Caco-2 (cell line): ENCODE measurements at regions of chr6 and their contacts with region 1.

Region 1: GRCh38 chr6:79894939-79895338 is 52.4 kb downstream of the ELOVL4 start:
- DNase-seq: no peak
- H3K4me3 ChIP-seq: no peak overlapping the region
- H3K4me3 Mint-ChIP-seq: no peak overlapping the region
- H3K27ac Mint-ChIP-seq: no peak overlapping the region
- H3K4me1 ChIP-seq: no peaks in the 10 kb centered on the region
- H3K4me1 Mint-ChIP-seq: no peaks in the 10 kb centered on the region
- H3K27me3 ChIP-seq: no peaks in the 10 kb centered on the region
- H3K27me3 Mint-ChIP-seq: no peaks in the 10 kb centered on the region
- CTCF ChIP-seq: no peak

Region 2: DNA sequence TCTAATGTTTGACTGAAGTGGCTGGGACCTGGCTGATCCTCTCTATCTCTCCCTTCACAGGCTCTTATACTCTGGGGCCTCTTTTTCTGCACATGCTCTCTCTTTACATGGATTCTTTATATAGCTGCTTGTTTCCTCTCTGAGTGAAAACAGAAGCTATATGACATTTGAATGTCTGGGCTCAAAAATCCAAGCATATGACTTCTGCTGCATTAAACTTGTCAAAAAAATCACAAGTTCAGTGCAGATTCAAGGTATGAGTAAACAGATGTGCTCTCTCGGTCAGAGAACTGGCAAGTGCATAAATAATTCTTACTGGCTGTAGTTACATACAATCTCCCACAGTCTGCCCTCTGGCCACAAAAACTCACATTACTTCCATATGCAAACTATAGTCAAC is 454.3 kb before region 1 on chr6:
- CTCF ChIA-PET with region 1: no interaction called
- POLR2A ChIA-PET with region 1: no interaction called
- intact Hi-C with region 1: no loop called
- DNase-seq: no peak
- H3K4me3 ChIP-seq: no peak overlapping the region
- H3K4me3 Mint-ChIP-seq: no peak overlapping the region
- H3K27ac Mint-ChIP-seq: peak overlapping the region; percentile 24
- H3K4me1 ChIP-seq: peaks cover 23% of the 10 kb centered on the region
- H3K4me1 Mint-ChIP-seq: peaks cover 22% of the 10 kb centered on the region
- H3K27me3 ChIP-seq: no peaks in the 10 kb centered on the region
- H3K27me3 Mint-ChIP-seq: no peaks in the 10 kb centered on the region
- CTCF ChIP-seq: no peak

Region 3: GRCh38 chr6:79878142-79878753 is 16.7 kb before region 1 on chr6:
- CTCF ChIA-PET with region 1: no interaction called
- POLR2A ChIA-PET with region 1: no interaction called
- intact Hi-C with region 1: no loop called
- DNase-seq: no peak
- H3K4me3 ChIP-seq: no peak overlapping the region
- H3K4me3 Mint-ChIP-seq: no peak overlapping the region
- H3K27ac Mint-ChIP-seq: no peak overlapping the region
- H3K4me1 ChIP-seq: peaks cover 9% of the 10 kb centered on the region; the same call in 1 of the 2 replicates
- H3K4me1 Mint-ChIP-seq: peaks cover 14% of the 10 kb centered on the region
- H3K27me3 ChIP-seq: no peaks in the 10 kb centered on the region
- H3K27me3 Mint-ChIP-seq: no peaks in the 10 kb centered on the region
- CTCF ChIP-seq: no peak

Region 4: GRCh38 chr6:81023007-81023582 is 1128.2 kb after region 1 on chr6:
- CTCF ChIA-PET with region 1: no interaction called
- POLR2A ChIA-PET with region 1: no interaction called
- intact Hi-C with region 1: loop called (anchors 5 kb)
- DNase-seq: no peak
- H3K4me3 ChIP-seq: no peak overlapping the region
- H3K4me3 Mint-ChIP-seq: no peak overlapping the region
- H3K27ac Mint-ChIP-seq: no peak overlapping the region
- H3K4me1 ChIP-seq: no peaks in the 10 kb centered on the region
- H3K4me1 Mint-ChIP-seq: no peaks in the 10 kb centered on the region
- H3K27me3 ChIP-seq: no peaks in the 10 kb centered on the region
- H3K27me3 Mint-ChIP-seq: no peaks in the 10 kb centered on the region
- CTCF ChIP-seq: no peak